ENCODE measurements at regions of chr3 and their contacts with region 1.

Region 1: DNA sequence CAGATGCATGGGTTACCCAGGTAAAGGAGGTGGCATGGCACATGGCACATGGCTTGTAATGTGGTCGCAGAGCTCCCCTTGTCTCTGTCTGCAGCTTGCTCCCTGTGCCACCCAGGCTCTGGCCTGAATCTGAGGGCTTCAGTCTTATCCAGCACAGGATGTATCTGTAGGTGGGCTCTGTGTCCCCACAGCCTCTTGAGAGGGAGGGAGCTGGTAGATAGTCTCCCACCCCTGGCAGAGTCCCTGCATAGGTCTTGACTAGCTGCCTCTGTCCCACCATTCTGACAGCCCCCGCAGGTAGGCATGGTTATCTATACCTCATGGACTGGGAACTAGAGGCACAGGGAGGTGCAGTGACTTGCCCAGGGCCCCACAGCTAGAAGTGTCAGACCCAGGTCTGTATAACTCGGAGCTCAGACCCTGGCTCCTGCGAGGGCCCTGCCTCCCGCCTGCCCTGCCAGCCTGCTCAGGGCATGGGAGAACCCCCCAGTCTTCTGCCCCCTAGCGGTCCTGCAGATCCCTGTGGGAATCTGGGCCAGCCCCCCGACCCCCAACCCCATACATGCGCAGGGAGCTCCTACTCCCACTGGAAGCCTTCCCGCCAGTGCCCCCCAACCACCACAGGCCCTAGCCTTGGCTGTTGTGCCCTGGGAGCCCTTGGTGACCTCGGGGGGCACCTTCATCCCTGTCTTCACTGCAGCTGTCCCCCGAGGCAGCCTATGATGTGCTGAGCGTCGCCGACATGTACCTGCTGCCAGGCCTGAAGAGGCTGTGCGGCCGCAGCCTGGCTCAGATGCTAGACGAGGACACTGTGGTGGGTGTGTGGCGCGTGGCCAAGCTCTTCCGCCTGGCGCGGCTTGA is 6.8 kb downstream of the ABTB1 start:
- DNase-seq: peak; percentile 69
- ATAC-seq: peak; percentile 73
- H3K4me3 Mint-ChIP-seq: no peak overlapping the region
- H3K27ac Mint-ChIP-seq: no peak overlapping the region
- H3K4me1 Mint-ChIP-seq: peaks cover 12% of the 10 kb centered on the region
- H3K27me3 Mint-ChIP-seq: no peaks in the 10 kb centered on the region; the same call in 1 of the 2 replicates
- CTCF ChIP-seq: peak; percentile 52; the same call in 1 of the 2 replicates

Region 2: DNA sequence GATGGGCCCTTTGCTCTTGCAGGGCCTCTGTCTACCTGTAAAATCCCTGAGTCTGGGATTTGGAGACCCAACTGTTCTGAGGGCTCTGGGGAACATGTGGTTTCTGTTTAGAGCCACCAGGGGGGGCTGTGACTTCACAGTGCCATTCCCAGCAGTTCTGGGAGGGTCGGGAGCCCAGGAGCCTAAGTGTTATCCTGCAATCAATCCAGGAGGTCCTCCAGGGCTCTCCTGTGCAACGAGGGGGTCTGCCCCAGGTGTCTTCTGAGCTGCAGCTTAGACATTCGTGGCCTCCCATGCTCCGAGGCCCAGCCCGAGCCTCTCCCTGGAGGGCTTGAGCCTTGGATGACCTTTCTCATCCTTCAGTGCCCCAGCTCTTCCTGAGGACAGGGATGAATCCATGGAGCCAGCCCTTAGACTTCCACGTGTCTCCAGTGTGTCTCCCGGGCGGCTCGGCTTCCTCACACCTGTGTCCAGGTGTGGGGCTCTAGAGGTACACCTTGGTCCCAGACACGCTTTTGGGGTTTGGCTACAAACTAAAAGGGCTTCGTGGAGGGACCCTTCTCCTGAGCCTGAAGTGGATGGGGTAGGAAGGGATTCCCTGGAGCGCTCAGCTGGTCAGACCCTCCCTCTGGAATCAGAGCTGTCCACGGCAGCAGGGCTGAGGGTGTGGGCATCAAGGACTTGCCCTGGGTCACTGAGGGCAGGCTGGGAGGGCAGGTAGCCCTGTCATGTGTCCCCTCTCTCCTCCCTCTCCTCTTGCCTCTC is 27.1 kb before region 1 on chr3:
- CTCF ChIA-PET with region 1: interaction called, 25 read pairs
- POLR2A ChIA-PET with region 1: no interaction called
- DNase-seq: peak; percentile 70
- ATAC-seq: peak; percentile 98
- H3K4me3 Mint-ChIP-seq: no peak overlapping the region
- H3K27ac Mint-ChIP-seq: no peak overlapping the region
- H3K4me1 Mint-ChIP-seq: no peaks in the 10 kb centered on the region
- H3K27me3 Mint-ChIP-seq: no peaks in the 10 kb centered on the region
- CTCF ChIP-seq: peak; percentile 77

Region 3: DNA sequence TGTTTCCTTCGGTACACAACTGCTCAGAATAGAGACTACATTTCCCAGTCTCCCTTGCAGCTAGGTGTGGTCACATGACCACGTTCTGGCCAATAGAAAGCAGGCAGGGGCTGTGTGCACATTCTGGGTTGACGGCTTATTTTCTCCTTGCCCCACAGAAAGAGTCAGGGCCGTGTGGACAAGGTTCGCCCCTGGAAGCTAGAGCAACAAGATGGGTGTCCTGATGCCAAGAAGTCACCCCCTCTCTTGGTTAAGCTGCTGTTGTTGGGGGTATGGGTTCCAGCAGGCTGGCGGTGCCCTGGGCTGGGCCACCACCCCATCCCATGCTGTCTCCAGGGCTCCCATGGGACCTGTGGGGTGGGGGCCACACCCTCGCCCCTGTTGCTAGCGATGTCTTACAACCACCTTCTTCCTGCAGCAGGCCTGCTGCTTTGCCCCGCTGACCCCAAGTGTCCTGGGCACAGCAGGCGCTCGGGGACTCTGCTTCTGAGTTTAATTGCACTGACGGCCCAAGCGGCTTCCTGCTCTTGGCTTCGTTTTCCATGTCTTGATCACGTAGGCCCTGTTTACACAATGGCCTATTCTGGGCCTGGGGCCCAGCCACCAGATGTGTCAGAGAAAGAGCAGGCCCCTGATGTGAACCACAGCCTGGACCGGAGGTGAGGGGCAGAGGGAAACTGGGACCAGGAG is 18.2 kb after region 1 on chr3:
- CTCF ChIA-PET with region 1: interaction called, 127 read pairs
- POLR2A ChIA-PET with region 1: no interaction called
- DNase-seq: peak; percentile 64
- ATAC-seq: peak; percentile 67
- H3K4me3 Mint-ChIP-seq: peak overlapping the region; percentile 39
- H3K27ac Mint-ChIP-seq: no peak overlapping the region
- H3K4me1 Mint-ChIP-seq: no peaks in the 10 kb centered on the region; the same call in 1 of the 2 replicates
- H3K27me3 Mint-ChIP-seq: no peaks in the 10 kb centered on the region
- CTCF ChIP-seq: no peak

Region 4: DNA sequence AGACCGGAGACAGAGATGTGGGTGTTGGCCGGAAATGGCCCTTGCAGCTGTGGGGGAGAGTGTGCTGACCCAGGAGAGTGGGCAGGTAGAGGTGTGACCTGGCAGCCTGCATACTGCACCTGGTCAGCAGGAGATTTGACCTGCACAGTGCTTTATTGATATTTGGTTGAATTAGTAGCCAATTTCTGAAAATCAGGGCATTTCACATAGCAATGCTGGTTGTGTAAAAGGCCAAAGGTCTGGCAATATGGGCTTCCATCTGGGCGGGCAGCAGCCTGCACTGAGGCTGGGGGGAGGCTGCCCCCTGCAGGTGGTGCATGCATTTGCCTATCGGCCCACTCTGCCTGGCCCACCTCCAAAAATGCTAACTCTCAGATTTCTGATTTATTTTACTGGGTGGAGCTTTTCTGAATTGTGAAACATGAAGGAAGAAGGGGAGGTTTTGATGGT is 152.2 kb after region 1 on chr3:
- CTCF ChIA-PET with region 1: interaction called, 18 read pairs
- POLR2A ChIA-PET with region 1: no interaction called
- DNase-seq: peak; percentile 77
- ATAC-seq: peak; percentile 94
- H3K4me3 Mint-ChIP-seq: no peak overlapping the region
- H3K27ac Mint-ChIP-seq: no peak overlapping the region
- H3K4me1 Mint-ChIP-seq: peaks cover 9% of the 10 kb centered on the region
- H3K27me3 Mint-ChIP-seq: no peaks in the 10 kb centered on the region
- CTCF ChIP-seq: peak; percentile 90